ENCODE measurements at regions of chr17 and their contacts with region 1.

Region 1: DNA sequence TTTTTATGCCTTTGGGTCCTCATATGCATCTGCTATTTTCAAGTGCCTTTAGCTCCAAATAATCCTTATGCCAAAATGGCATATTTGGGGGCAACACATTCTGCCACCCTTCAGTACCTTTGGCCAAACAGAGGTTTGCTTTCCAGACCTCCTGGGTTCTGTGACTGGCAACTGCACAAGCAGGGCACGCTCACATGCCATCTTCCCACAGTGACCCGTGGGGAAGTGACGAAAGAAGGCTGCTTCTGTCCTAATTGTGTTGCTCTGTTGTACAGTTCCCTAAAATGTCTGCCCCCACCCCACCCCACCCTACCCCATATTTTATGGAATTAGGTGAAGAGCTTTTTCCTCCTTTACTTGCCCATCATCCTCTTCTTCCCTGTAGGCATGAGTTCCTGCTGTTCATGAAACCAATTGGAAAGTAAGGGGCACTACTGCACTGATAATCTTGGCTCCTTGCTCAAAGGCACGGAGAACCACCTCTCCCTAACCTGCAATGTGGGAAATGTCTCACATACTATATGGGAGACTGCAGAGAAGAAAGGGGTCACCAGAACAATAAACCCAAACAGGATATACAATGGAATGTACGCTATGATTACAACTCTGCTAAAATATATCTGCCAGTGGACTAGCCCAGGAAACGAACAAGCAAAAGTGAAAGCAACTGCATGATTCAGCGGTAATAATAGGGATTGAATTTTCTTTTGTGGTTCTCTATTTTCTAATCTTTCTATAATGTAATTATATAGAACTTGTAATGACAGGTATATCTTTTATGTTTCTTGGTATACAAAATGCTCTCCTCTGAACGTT is 3.3 kb upstream of the SLFN12L start:
- DNase-seq: peak; percentile 17
- H3K4me3 ChIP-seq: peak overlapping the region; percentile 30
- H3K27ac ChIP-seq: peak overlapping the region; percentile 50
- H3K4me1 ChIP-seq: peaks cover 9% of the 10 kb centered on the region
- H3K27me3 ChIP-seq: no peaks in the 10 kb centered on the region
- CTCF ChIP-seq: no peak

Region 2: GRCh38 chr17:35170968-35171771 is 369.6 kb before region 1 on chr17:
- CTCF ChIA-PET with region 1: no interaction called
- POLR2A ChIA-PET with region 1: no interaction called
- intact Hi-C with region 1: loop called (anchors 2 kb)
- DNase-seq: peak; percentile 37
- H3K4me3 ChIP-seq: no peak overlapping the region
- H3K27ac ChIP-seq: no peak overlapping the region
- H3K4me1 ChIP-seq: no peaks in the 10 kb centered on the region
- H3K27me3 ChIP-seq: no peaks in the 10 kb centered on the region
- CTCF ChIP-seq: peak; percentile 36; the same call in 1 of the 2 replicates

Region 3: GRCh38 chr17:35242805-35243560 is 297.8 kb before region 1 on chr17 and contains the start of gene SLFN5:
- CTCF ChIA-PET with region 1: no interaction called
- POLR2A ChIA-PET with region 1: no interaction called
- intact Hi-C with region 1: no loop called
- DNase-seq: peak; percentile 80
- H3K4me3 ChIP-seq: peak within 1 kb of the TSS; percentile 76
- H3K27ac ChIP-seq: peak within 1 kb of the TSS; percentile 74
- H3K4me1 ChIP-seq: peaks cover 15% of the 10 kb centered on the region
- H3K27me3 ChIP-seq: no peaks in the 10 kb centered on the region
- CTCF ChIP-seq: no peak
- total RNA-seq, gene SLFN5: 5.2 and 5.3 TPM in 2 replicates

Region 4: DNA sequence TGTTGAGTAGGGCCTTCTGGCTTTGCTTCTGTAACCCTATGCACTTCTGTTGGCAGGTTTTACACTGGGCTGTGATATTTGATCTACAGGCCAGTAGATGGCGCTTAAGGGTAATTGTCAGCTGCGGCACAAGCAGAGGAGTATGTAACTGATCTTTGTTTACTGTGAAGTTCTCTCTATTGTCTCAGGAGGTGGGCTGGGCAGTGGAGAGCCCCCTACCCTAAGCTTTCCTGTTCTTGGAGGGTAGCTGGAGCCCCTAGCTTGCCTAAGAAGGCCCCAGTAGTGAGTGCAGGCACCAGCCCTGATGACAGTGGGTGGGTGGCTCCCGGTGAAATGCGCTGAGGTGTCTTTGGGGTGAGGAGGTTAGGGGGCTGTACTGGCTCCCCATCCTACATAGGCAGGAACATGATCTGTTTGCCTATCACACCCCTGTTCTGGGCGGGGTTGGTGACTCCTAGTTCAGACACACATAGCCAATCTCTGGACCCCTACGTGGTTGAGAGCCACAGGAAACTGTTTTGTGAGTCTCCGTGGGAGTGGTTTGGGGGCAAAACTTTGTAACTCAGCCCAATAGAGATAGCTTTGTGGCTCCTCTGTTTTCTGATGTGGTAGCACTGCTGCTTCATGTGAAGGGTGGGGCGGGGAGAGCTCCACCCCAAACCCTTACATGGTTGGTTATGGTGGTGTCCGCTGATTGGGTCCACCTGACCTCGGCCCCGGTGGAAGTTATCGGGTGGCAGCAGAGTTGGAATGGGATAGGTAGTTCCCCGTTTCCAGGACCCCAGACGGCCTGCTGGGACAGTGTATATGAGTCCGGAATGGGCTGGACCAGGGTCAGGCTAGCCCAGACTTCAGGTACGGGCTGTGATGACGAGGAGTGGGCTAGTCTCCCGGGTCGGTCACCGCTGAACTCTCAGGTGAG is 227.7 kb before region 1 on chr17:
- CTCF ChIA-PET with region 1: no interaction called
- POLR2A ChIA-PET with region 1: no interaction called
- intact Hi-C with region 1: loop called (anchors 2 kb)
- DNase-seq: peak; percentile 64
- H3K4me3 ChIP-seq: no peak overlapping the region
- H3K27ac ChIP-seq: peak overlapping the region; percentile 61
- H3K4me1 ChIP-seq: peaks cover 5% of the 10 kb centered on the region
- H3K27me3 ChIP-seq: no peaks in the 10 kb centered on the region
- CTCF ChIP-seq: peak; percentile 66

Region 5: GRCh38 chr17:35448214-35448898 is 92.4 kb before region 1 on chr17 and contains the start of gene SLFN13:
- CTCF ChIA-PET with region 1: no interaction called
- POLR2A ChIA-PET with region 1: no interaction called
- intact Hi-C with region 1: no loop called
- DNase-seq: peak; percentile 71
- H3K4me3 ChIP-seq: peak within 1 kb of the TSS; percentile 15
- H3K27ac ChIP-seq: no peak within 1 kb of the TSS
- H3K4me1 ChIP-seq: peaks cover 4% of the 10 kb centered on the region
- H3K27me3 ChIP-seq: no peaks in the 10 kb centered on the region
- CTCF ChIP-seq: no peak
- total RNA-seq, gene SLFN13: 31.6 and 34.0 TPM in 2 replicates

Region 6: GRCh38 chr17:35578197-35578928 is 37.6 kb after region 1 on chr17 and contains the start of gene PEX12:
- CTCF ChIA-PET with region 1: no interaction called
- POLR2A ChIA-PET with region 1: no interaction called
- intact Hi-C with region 1: no loop called
- DNase-seq: peak; percentile 84
- H3K4me3 ChIP-seq: peak within 1 kb of the TSS; percentile 64
- H3K27ac ChIP-seq: peak within 1 kb of the TSS; percentile 77
- H3K4me1 ChIP-seq: peaks cover 3% of the 10 kb centered on the region
- H3K27me3 ChIP-seq: no peaks in the 10 kb centered on the region
- CTCF ChIP-seq: no peak
- total RNA-seq, gene PEX12: 2.5 and 3.2 TPM in 2 replicates

Measured in A673 (cell line).